ENCODE measurements at regions of chr14 and their contacts with region 1.

Region 1: DNA sequence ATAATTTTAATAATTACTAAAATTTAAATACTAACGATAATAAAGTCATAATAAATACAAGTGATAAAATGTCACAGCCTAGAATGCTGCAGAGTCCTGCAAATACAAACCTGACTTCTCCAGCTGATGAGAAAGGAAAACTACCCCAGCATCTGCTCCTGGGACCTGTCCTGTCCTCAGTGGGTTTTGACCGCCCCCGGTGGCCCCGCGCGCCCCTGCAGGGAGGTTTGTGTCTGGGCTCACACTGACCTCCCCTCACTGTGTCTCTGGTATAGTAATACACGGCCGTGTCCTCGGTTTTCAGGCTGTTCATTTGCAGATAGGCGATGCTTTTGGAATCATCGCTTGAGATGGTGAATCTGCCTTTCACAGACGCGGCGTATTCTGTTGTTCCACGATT is 1139.4 kb downstream of the TMEM121 start:
- DNase-seq: no peak
- ATAC-seq: no peak
- H3K4me3 ChIP-seq: no peak overlapping the region
- H3K27ac ChIP-seq: no peak overlapping the region
- H3K4me1 ChIP-seq: no peaks in the 10 kb centered on the region
- H3K27me3 ChIP-seq: peaks cover 0 to 3% of the 10 kb centered on the region in 2 experiments; a peak in 1 of 4 replicates
- CTCF ChIP-seq: no peak
- EP300 ChIP-seq: no peak
- POLR2A ChIP-seq: no peak
- RAD21 ChIP-seq: no peak

Region 2: GRCh38 chr14:106611272-106611671 is 54.5 kb before region 1 on chr14:
- CTCF ChIA-PET with region 1: interaction called, 9 read pairs
- POLR2A ChIA-PET with region 1: no interaction called
- RAD21 ChIA-PET with region 1: no interaction called
- SMC1A ChIA-PET with region 1: no interaction called
- in situ Hi-C with region 1: no loop called
- intact Hi-C with region 1: loop called (anchors 5 kb)
- DNase-seq: no peak
- ATAC-seq: no peak
- H3K4me3 ChIP-seq: no peak overlapping the region
- H3K27ac ChIP-seq: no peak overlapping the region
- H3K4me1 ChIP-seq: no peaks in the 10 kb centered on the region
- H3K27me3 ChIP-seq: peaks cover 0 to 3% of the 10 kb centered on the region in 2 experiments; a peak in 1 of 4 replicates
- CTCF ChIP-seq: no peak
- EP300 ChIP-seq: no peak
- POLR2A ChIP-seq: no peak
- RAD21 ChIP-seq: no peak

Region 3: DNA sequence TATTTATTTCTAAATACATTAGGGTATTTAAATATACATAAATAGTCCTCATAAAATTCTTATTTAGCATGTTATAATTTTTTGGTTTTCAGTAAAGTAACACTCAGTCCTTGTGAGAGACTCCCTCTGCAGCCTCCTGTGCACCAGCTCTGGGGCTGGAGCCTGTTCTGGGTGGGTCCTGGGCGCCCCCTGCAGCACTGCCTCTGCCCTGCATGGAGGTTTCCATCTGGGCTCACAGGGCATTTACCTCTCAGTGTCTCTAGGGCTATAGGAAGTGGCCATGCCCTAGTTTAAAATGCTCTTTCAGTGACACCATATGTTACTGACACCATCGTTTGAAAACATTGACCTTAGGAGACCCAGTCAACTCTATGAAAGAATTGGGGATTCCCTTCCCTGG is 15.8 kb after region 1 on chr14:
- CTCF ChIA-PET with region 1: interaction called, 69 read pairs
- POLR2A ChIA-PET with region 1: no interaction called
- RAD21 ChIA-PET with region 1: no interaction called
- SMC1A ChIA-PET with region 1: interaction called, 5 read pairs
- in situ Hi-C with region 1: no loop called
- intact Hi-C with region 1: no loop called
- DNase-seq: no peak
- ATAC-seq: peak; percentile 99
- H3K4me3 ChIP-seq: no peak overlapping the region
- H3K27ac ChIP-seq: no peak overlapping the region
- H3K4me1 ChIP-seq: no peaks in the 10 kb centered on the region
- H3K27me3 ChIP-seq: peaks cover 0 to 5% of the 10 kb centered on the region in 2 experiments; a peak in 2 of 4 replicates
- CTCF ChIP-seq: peak; percentile 13 to 44 (median 44); a peak in 5 of 6 replicates
- EP300 ChIP-seq: no peak
- POLR2A ChIP-seq: no peak
- RAD21 ChIP-seq: no peak

Region 4: DNA sequence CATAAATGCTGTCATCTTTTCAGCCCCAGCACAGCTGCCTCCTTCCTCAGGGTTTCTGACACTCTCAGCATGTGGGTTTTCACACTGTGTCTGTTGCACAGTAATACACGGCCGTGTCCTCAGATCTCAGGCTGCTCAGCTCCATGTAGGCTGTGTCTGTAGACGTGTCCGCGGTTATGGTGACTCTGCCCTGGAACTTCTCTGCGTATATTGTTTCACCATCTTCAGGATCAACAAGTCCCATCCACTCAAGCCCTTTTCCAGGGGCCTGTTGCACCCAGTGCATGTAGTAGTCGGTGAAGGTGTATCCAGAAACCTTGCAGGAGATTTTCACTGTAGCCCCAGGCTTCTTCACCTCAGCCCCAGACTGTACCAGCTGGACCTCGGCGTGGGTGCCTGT is 71.2 kb after region 1 on chr14:
- CTCF ChIA-PET with region 1: no interaction called
- POLR2A ChIA-PET with region 1: no interaction called
- RAD21 ChIA-PET with region 1: no interaction called
- SMC1A ChIA-PET with region 1: no interaction called
- in situ Hi-C with region 1: no loop called
- intact Hi-C with region 1: no loop called
- DNase-seq: no peak
- ATAC-seq: no peak
- H3K4me3 ChIP-seq: no peak overlapping the region
- H3K27ac ChIP-seq: no peak overlapping the region
- H3K4me1 ChIP-seq: no peaks in the 10 kb centered on the region
- H3K27me3 ChIP-seq: no peaks in the 10 kb centered on the region
- CTCF ChIP-seq: no peak
- EP300 ChIP-seq: no peak
- POLR2A ChIP-seq: no peak
- RAD21 ChIP-seq: no peak

Region 5: GRCh38 chr14:106776395-106776983 is 110.7 kb after region 1 on chr14:
- CTCF ChIA-PET with region 1: interaction called, 13 read pairs
- POLR2A ChIA-PET with region 1: no interaction called
- RAD21 ChIA-PET with region 1: no interaction called
- SMC1A ChIA-PET with region 1: no interaction called
- in situ Hi-C with region 1: no loop called
- intact Hi-C with region 1: no loop called
- DNase-seq: no peak
- ATAC-seq: 0 out of 3 replicates have a peak, but pooled peaks have one; percentile 16
- H3K4me3 ChIP-seq: no peak overlapping the region
- H3K27ac ChIP-seq: no peak overlapping the region
- H3K4me1 ChIP-seq: peaks cover 8% of the 10 kb centered on the region
- H3K27me3 ChIP-seq: no peaks in the 10 kb centered on the region
- CTCF ChIP-seq: no peak
- EP300 ChIP-seq: no peak
- POLR2A ChIP-seq: no peak
- RAD21 ChIP-seq: no peak

Region 6: GRCh38 chr14:106831322-106831720 is 165.5 kb after region 1 on chr14:
- CTCF ChIA-PET with region 1: interaction called, 26 read pairs
- POLR2A ChIA-PET with region 1: no interaction called
- RAD21 ChIA-PET with region 1: interaction called, 4 read pairs
- SMC1A ChIA-PET with region 1: interaction called, 4 read pairs
- in situ Hi-C with region 1: no loop called
- intact Hi-C with region 1: no loop called
- DNase-seq: no peak
- ATAC-seq: peak; percentile 88
- H3K4me3 ChIP-seq: no peak overlapping the region
- H3K27ac ChIP-seq: no peak overlapping the region
- H3K4me1 ChIP-seq: no peaks in the 10 kb centered on the region; the same call in 1 of the 2 replicates
- H3K27me3 ChIP-seq: no peaks in the 10 kb centered on the region
- CTCF ChIP-seq: peak; percentile 93 to 99 (median 96)
- EP300 ChIP-seq: no peak
- POLR2A ChIP-seq: no peak
- RAD21 ChIP-seq: peak; percentile 43

Measured in GM12878 (cell line).